ENCODE measurements at regions of chr22 and their contacts with region 1.

Region 1: DNA sequence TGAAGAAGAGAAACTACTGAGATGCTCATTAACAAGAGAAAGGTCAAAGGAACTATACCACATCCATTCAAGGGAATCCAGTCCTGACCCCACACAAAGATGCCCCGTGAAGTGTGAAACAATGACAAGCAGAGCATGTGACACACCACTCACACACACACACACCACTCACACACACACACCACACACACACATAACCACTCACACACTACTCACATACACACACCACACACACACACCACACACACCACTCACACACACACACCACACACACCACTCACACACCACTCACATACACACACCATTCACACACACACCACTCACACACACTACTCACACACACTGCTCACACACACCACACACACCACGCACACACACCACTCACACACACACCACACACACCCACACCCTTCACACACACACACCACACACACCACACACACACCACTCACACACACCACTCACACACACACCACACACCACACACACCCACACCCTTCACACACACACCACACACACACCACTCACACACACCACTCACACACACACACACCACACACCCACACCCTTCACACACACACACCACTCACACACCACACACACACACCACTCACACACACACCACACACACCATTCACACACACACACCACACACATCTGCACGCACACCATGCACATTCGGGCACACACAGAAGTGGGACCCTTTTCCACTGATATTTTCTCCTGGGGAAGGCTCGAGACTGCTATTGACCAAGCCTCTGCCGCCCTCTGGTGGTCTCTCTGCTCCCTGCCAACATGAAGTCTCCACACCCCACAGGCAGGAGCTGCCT is 32.0 kb upstream of the COMT start:
- DNase-seq: peak; percentile 90
- H3K4me3 ChIP-seq: no peak overlapping the region
- H3K27ac ChIP-seq: no peak overlapping the region
- H3K4me1 ChIP-seq: peaks cover 0 to 12% of the 10 kb centered on the region in 2 experiments; a peak in 2 of 4 replicates
- H3K27me3 ChIP-seq: no peaks in the 10 kb centered on the region
- CTCF ChIP-seq: peak; percentile 88
- EP300 ChIP-seq: no peak
- RAD21 ChIP-seq: peak; percentile 98

Region 2: DNA sequence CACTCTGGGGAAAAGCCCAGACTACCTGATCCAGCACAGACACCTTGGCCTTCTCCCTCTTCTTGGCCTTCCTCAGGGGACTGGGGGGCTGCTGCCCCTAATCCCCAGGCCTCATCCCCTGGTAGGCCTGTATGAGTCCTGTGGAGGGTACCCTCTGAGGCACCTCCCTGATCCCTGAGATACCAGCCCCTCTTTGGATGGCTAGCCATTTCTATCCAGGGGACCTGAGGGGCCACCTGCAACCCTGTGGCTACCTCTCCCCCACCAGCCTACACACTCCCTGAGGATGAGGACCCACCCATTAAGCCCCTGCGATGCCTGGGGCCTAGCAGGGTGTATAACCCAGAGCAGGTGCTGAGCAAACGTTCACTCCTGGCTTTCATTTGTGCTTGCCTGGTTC is 532.6 kb before region 1 on chr22:
- CTCF ChIA-PET with region 1: no interaction called
- POLR2A ChIA-PET with region 1: no interaction called
- DNase-seq: no peak
- H3K4me3 ChIP-seq: no peak overlapping the region
- H3K27ac ChIP-seq: no peak overlapping the region
- H3K4me1 ChIP-seq: no peaks in the 10 kb centered on the region
- H3K27me3 ChIP-seq: no peaks in the 10 kb centered on the region
- CTCF ChIP-seq: no peak
- EP300 ChIP-seq: no peak
- RAD21 ChIP-seq: no peak

Region 3: DNA sequence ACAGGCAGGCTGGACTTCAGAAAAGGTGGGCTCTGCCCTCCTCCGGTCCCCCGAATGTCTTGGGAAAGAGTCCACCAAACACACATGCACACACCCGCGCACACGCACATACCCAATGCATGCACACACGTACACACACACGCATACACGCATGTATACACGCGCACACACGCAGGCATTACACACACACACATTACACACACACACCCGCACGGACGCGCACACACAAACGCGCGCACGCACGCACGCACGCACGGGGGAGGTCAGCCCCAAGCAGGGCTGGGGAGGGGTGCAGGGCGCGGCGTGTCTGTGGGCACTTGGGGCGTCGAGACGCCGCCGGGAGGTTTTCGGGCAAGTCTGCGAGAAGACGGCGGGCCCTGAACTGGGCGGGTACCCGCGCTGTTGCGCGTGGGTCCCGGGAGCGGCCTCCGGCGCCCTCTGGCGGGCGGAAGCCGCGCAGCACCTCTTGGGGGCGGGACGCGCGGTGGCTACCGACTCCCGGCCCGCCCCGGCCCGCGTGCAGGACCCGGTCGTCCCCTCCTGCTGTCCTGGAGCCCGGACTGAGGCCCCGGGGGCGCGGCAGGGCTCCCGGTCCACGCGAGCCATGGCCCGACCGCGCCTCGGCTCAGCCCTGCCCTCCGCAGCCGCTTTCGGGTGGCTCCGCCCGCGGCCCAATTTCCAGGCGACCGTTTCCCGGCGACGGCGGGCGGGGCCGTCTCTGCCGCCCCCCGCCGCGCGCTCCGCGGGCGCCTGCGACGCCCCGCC is 191.7 kb before region 1 on chr22:
- CTCF ChIA-PET with region 1: interaction called, 14 read pairs
- POLR2A ChIA-PET with region 1: no interaction called
- DNase-seq: peak; percentile 97
- H3K4me3 ChIP-seq: peak overlapping the region; percentile 62 to 67
- H3K27ac ChIP-seq: peak overlapping the region in 1 of 2 experiments; percentile 56; a peak in 1 of 4 replicates
- H3K4me1 ChIP-seq: peaks cover 0 to 42% of the 10 kb centered on the region in 2 experiments; a peak in 1 of 4 replicates
- H3K27me3 ChIP-seq: no peaks in the 10 kb centered on the region
- CTCF ChIP-seq: peak; percentile 64
- EP300 ChIP-seq: no peak
- RAD21 ChIP-seq: peak; percentile 75

Region 4: GRCh38 chr22:19745155-19746101 is 164.1 kb before region 1 on chr22:
- CTCF ChIA-PET with region 1: interaction called, 17 read pairs
- POLR2A ChIA-PET with region 1: no interaction called
- DNase-seq: no peak
- H3K4me3 ChIP-seq: no peak overlapping the region
- H3K27ac ChIP-seq: no peak overlapping the region
- H3K4me1 ChIP-seq: peaks cover 0 to 15% of the 10 kb centered on the region in 2 experiments; a peak in 1 of 4 replicates
- H3K27me3 ChIP-seq: no peaks in the 10 kb centered on the region
- CTCF ChIP-seq: no peak
- EP300 ChIP-seq: no peak
- RAD21 ChIP-seq: no peak

Region 5: GRCh38 chr22:19756288-19757128 is 153.1 kb before region 1 on chr22:
- CTCF ChIA-PET with region 1: interaction called, 15 read pairs
- POLR2A ChIA-PET with region 1: no interaction called
- DNase-seq: peak; percentile 78
- H3K4me3 ChIP-seq: no peak overlapping the region
- H3K27ac ChIP-seq: no peak overlapping the region
- H3K4me1 ChIP-seq: peaks cover 0 to 6% of the 10 kb centered on the region in 2 experiments; a peak in 2 of 4 replicates
- H3K27me3 ChIP-seq: peaks cover 53% of the 10 kb centered on the region
- CTCF ChIP-seq: peak; percentile 47
- EP300 ChIP-seq: no peak
- RAD21 ChIP-seq: peak; percentile 46

Region 6: GRCh38 chr22:19891317-19892256 is 18.0 kb before region 1 on chr22:
- CTCF ChIA-PET with region 1: interaction called, 20 read pairs
- POLR2A ChIA-PET with region 1: interaction called, 5 read pairs
- DNase-seq: peak; percentile 89
- H3K4me3 ChIP-seq: no peak overlapping the region
- H3K27ac ChIP-seq: peak overlapping the region; percentile 72 to 98
- H3K4me1 ChIP-seq: peaks cover 42 to 43% of the 10 kb centered on the region in 2 experiments
- H3K27me3 ChIP-seq: no peaks in the 10 kb centered on the region
- CTCF ChIP-seq: no peak
- EP300 ChIP-seq: peak; percentile 74 to 90; a peak in 3 of 4 replicates
- RAD21 ChIP-seq: no peak

Region 7: GRCh38 chr22:19896665-19897355 is 12.8 kb before region 1 on chr22:
- CTCF ChIA-PET with region 1: interaction called, 38 read pairs
- POLR2A ChIA-PET with region 1: interaction called, 5 read pairs
- DNase-seq: peak; percentile 81
- H3K4me3 ChIP-seq: no peak overlapping the region
- H3K27ac ChIP-seq: peak overlapping the region in 1 of 2 experiments; percentile 82; a peak in 2 of 4 replicates
- H3K4me1 ChIP-seq: peaks cover 14 to 47% of the 10 kb centered on the region in 2 experiments; a peak in 3 of 4 replicates
- H3K27me3 ChIP-seq: no peaks in the 10 kb centered on the region
- CTCF ChIP-seq: no peak
- EP300 ChIP-seq: no peak
- RAD21 ChIP-seq: peak; percentile 28

Region 8: DNA sequence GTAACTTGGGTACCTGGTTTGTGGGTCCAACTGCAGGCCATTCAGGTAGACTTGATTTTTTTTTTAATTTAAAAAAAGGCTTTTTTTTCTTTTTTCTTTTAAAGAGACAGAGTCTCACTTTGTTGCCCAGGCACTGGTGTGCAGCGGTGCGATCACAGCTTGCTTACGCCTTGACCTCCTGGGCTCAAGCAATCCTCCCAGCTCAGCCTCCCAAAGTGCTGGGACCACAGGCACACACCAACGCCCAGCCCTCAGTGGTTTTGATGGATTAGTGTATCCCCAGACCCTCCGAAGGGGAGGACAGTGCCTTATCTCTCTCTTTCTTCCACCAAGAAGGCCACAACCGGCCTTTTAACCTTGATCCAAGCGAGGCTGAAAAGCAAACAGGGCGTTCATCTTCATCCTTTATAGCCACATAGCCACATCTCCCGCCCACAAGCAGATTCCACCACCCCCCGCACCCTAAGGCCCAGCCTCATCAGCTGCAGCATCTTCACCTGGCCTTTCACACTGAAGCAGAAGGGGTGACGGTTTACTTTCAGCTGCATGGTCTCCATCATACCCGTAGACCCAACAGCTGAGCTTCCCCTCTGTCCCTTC is 14.4 kb after region 1 on chr22:
- CTCF ChIA-PET with region 1: interaction called, 15 read pairs
- POLR2A ChIA-PET with region 1: no interaction called
- DNase-seq: no peak
- H3K4me3 ChIP-seq: no peak overlapping the region
- H3K27ac ChIP-seq: no peak overlapping the region
- H3K4me1 ChIP-seq: no peaks in the 10 kb centered on the region
- H3K27me3 ChIP-seq: no peaks in the 10 kb centered on the region
- CTCF ChIP-seq: no peak
- EP300 ChIP-seq: no peak
- RAD21 ChIP-seq: no peak

Measured in SK-N-SH (cell line).